Activated CD8-positive, alpha-beta T cell treated with anti-CD3 and anti-CD28 coated beads, Interleukin-2, amount 10 ng/mL, durations not matched to agents 7 days and 5 days (primary cell): ENCODE measurements at regions of chr10 and their contacts with region 1.

Region 1: DNA sequence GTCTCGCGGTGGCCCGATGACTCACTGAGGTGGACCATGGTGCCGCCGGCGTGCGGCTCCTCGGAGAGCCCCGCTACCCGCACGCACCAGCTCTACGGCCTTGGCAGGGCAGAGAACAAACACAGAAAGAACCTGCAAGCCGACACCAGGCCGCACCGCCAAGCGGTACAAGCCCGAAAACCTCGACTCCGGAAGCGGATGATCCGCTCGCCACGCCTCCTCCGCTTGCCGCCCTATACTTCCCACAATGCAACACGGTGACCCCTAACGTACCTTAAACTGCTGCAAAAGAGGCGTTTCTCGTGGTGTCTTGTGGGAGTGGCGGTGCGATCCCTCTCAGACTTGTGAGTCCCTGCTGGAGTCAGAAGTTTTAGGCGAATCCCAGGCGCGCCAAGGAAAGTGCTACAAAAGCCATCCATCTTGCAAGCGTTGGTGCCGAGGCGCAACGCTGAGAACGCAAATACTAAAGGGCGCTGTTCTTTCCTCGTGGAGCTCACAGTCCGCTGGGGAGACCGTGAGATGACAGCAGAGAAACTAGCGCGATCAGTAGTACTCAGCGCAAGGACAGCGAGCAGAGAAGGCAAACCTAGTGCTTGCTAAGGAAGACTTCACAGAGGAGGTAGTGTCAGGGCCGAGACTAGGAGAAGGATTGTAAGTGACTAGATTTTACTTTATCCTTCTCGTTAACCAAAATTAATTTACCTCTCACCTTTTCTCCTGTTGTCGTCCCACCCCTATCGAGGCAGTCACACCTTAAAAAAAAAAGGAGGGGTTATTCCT is at the start of gene MRPS16:
- DNase-seq: peak; percentile 96
- ATAC-seq: peak; percentile 83
- H3K4me3 Mint-ChIP-seq: peak within 1 kb of the TSS; percentile 99
- H3K27ac Mint-ChIP-seq: peak within 1 kb of the TSS; percentile 91
- H3K4me1 Mint-ChIP-seq: peaks cover 37% of the 10 kb centered on the region
- H3K27me3 Mint-ChIP-seq: no peaks in the 10 kb centered on the region
- total RNA-seq, gene MRPS16: 97.5 to 103 TPM

Region 2: GRCh38 chr10:73263948-73264347 is 11.3 kb after region 1 on chr10:
- CTCF ChIA-PET with region 1: interaction called, 18 read pairs
- POLR2A ChIA-PET with region 1: interaction called, 9 read pairs
- DNase-seq: no peak
- ATAC-seq: no peak
- H3K4me3 Mint-ChIP-seq: no peak overlapping the region
- H3K27ac Mint-ChIP-seq: no peak overlapping the region
- H3K4me1 Mint-ChIP-seq: peaks cover 6% of the 10 kb centered on the region
- H3K27me3 Mint-ChIP-seq: peaks cover 4% of the 10 kb centered on the region

Region 3: GRCh38 chr10:73358331-73359279 is 106.0 kb after region 1 on chr10 and contains the start of gene CFAP70:
- CTCF ChIA-PET with region 1: interaction called, 6 read pairs
- POLR2A ChIA-PET with region 1: interaction called, 16 read pairs
- DNase-seq: peak; percentile 96
- ATAC-seq: peak; percentile 96
- H3K4me3 Mint-ChIP-seq: peak within 1 kb of the TSS; percentile 99
- H3K27ac Mint-ChIP-seq: peak within 1 kb of the TSS; percentile 90
- H3K4me1 Mint-ChIP-seq: peaks cover 16% of the 10 kb centered on the region
- H3K27me3 Mint-ChIP-seq: peaks cover 10% of the 10 kb centered on the region
- total RNA-seq, gene CFAP70: 0.40 to 0.57 TPM